Left ventricle myocardium inferior (tissue), 1 donor: ENCODE measurements at regions of chr4 and their contacts with region 1.

Region 1: DNA sequence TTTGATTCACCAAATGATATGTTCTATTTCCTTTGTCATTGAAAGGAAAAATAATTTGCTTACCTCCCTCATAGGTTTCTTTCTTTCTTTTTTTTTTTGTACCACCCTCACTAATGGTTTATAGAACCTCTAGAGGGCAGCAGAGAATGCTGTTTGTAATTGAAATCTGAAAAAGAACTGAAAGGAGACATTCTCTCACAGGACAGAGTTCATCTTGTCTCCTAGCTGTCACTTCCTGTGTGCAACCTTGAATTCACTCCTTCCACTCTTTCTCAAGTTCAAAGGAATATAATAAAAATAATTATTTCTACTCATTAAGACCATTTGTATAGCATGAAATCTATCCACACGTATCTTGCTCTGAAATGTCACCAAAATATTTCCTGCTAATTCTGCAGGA is 51.0 kb downstream of the GUCY1B1 start:
- DNase-seq: no peak
- H3K4me3 ChIP-seq: no peak overlapping the region
- H3K27ac ChIP-seq: peak overlapping the region; percentile 24
- H3K4me1 ChIP-seq: no peaks in the 10 kb centered on the region
- H3K27me3 ChIP-seq: no peaks in the 10 kb centered on the region
- CTCF ChIP-seq: peak; percentile 77

Region 2: GRCh38 chr4:155953151-155954114 is 143.6 kb after region 1 on chr4 and contains the start of gene CTSO:
- intact Hi-C with region 1: loop called (anchors 2 kb)
- DNase-seq: peak; percentile 75
- H3K4me3 ChIP-seq: peak within 1 kb of the TSS; percentile 90
- H3K27ac ChIP-seq: peak within 1 kb of the TSS; percentile 99
- H3K4me1 ChIP-seq: peaks cover 20% of the 10 kb centered on the region
- H3K27me3 ChIP-seq: no peaks in the 10 kb centered on the region
- CTCF ChIP-seq: peak; percentile 72
- total RNA-seq, gene CTSO: 5.8 TPM

Region 3: DNA sequence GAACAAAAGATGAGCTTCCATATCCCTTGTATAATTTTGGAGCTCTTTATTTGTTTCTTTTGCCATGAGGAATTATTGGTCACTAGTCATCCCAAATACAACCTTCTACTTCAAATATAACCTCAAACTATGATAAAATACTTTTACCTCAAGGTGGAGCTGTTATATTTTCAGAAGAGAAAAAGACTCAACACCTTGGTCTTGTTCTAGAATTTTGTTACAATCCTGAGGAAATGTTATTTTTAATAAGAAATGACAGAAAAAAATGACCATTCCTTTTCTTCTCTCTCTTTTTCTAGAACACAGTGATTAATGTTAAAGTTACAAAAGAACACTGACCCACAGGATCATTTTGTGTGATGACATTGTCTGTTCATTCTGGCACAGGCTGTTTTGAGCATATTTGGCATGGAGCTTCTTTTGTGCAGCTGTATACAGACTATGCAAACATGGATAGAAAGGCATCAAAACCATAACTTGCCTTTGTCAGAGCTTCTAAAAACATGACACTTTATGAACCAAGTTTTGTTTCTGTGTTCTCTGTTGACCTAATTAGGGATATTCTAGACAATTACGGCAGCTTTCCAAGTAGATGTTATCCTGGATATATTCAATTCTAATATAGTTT is 303.4 kb after region 1 on chr4:
- intact Hi-C with region 1: no loop called
- DNase-seq: no peak
- H3K4me3 ChIP-seq: no peak overlapping the region
- H3K27ac ChIP-seq: no peak overlapping the region
- H3K4me1 ChIP-seq: no peaks in the 10 kb centered on the region
- H3K27me3 ChIP-seq: no peaks in the 10 kb centered on the region
- CTCF ChIP-seq: peak; percentile 16